Right lobe of liver (tissue), 6 donors: ENCODE measurements at regions of chr3 and their contacts with region 1.

Region 1: GRCh38 chr3:69671082-69671952 is 67.9 kb upstream of the MITF start:
- DNase-seq: no peak
- ATAC-seq: peak; percentile 57 to 75 (median 64)
- H3K4me3 ChIP-seq: no peak overlapping the region
- H3K27ac ChIP-seq: no peak overlapping the region
- H3K4me1 ChIP-seq: no peaks in the 10 kb centered on the region
- H3K27me3 ChIP-seq: no peaks in the 10 kb centered on the region
- CTCF ChIP-seq: peak; percentile 73 to 77 (median 73)
- POLR2A ChIP-seq: no peak

Region 2: DNA sequence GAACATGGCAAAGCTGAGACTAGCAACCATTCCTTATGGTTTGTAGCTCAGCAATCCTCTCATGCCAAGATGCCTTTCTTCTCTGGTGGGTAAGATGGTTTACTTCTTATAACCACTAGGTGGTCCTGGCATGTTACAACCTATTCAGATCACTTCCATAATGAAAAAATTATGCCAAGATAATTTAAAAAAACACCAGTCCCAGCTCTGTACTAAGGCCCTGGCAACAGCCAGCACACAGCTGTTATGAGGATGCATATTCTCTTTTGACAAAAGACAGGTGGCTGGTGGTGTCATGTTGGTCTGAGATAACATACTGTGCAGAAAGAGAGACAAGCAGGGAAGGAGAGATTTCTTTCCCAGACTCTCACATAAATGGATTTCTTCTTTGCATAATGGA is 219.7 kb before region 1 on chr3:
- intact Hi-C with region 1: loop called in 1 of 2 experiments (anchors 10 kb)
- DNase-seq: no peak
- ATAC-seq: no peak
- H3K4me3 ChIP-seq: no peak overlapping the region
- H3K27ac ChIP-seq: no peak overlapping the region
- H3K4me1 ChIP-seq: no peaks in the 10 kb centered on the region
- H3K27me3 ChIP-seq: no peaks in the 10 kb centered on the region
- CTCF ChIP-seq: no peak
- POLR2A ChIP-seq: no peak